ENCODE measurements at regions of chr12 and their contacts with region 1.

Region 1: DNA sequence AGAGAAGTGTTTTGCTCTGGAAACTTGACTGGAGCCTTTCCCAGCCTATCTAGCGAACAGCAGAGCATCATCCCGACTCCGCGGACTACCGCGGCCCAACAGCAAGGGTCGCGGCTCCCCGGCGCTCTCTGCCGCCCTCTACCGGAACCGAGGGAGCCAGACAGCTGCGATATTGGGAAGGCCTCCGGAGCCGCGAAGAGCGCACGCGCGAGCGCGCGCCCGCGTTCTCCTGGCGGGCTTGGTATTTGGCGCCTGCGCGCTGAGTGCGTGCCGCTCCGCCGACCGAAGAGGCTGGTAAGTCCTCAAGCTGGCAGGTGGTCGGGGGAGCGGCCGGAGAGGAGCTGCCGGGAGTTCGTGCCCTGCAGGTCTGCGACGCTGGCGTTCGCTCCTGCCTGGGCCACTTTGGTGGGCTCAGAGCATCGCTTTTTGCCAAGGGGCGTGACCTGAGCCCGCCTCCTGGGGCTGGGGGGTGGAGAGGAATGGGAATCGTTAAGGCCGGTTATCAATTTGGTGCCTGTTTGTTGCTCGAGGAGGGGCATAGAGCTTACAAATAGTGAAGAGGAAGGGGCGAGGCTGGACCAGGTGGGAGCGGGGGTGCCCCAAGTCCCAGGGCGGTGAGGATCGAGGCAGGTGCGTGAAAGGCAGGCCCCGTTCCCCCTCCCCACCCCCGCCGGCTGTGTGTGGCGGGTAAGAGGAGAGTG is at the start of gene TMEM106C:
- DNase-seq: peak; percentile 88 to 94 (median 92)
- ATAC-seq: peak; percentile 99
- H3K4me3 ChIP-seq: peak within 1 kb of the TSS; percentile 90
- H3K4me3 Mint-ChIP-seq: peak within 1 kb of the TSS; percentile 92 to 100 (median 96)
- H3K27ac ChIP-seq: peak within 1 kb of the TSS; percentile 75
- H3K27ac Mint-ChIP-seq: peak within 1 kb of the TSS; percentile 86 to 94 (median 90)
- H3K4me1 ChIP-seq: peaks cover 7 to 13% of the 10 kb centered on the region in 2 donors
- H3K4me1 Mint-ChIP-seq: peaks cover 20 to 42% (median 34%) of the 10 kb centered on the region in 7 donors
- H3K27me3 ChIP-seq: no peaks in the 10 kb centered on the region
- H3K27me3 Mint-ChIP-seq: peaks cover 0 to 36% (median 6%) of the 10 kb centered on the region in 5 donors
- total RNA-seq, gene TMEM106C: 20.7 to 120 (median 34.4) TPM

Region 2: DNA sequence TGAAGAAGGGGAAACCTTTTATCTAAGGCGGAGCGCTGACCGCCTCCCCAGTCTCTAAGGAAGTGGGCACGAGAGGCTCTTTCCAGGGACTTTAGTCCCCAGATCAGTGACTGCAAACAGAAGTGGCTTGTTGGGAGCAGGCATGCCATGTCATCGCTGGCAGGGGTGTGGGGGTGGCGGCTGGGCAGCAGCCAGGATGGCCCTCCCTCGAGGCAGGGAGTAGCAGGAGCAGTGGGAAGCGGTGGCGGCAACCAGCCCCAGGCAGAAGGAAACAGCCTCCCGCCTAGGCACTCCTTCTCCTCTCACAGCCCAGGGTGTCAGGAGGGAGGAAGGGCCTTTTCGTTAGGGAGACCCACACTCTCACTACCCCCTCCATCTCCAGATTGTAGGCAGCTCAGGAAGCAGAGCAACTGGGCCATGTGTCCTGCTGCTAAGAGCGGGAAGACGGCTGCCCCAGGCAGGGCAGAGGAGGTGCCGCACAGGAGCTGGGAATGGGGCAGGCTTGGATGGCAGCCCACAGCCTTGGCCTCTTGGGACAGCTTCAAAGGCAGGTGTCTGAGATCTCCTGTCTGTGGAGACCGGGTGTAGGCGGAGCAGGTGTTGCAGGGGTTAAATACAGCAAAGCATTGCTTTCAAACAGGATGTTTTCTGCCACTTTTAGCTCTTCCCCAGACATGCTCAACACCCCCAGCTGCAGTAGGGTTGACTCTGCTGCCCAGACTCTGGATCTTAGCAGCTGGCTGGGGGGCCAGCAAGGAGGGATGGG is 80.5 kb before region 1 on chr12:
- CTCF ChIA-PET with region 1: no interaction called
- POLR2A ChIA-PET with region 1: no interaction called
- intact Hi-C with region 1: loop called (anchors 5 kb)
- DNase-seq: peak in 7 of 9 donors; percentile 30 to 60 (median 55)
- ATAC-seq: peak; percentile 71
- H3K4me3 ChIP-seq: peak overlapping the region; percentile 73
- H3K4me3 Mint-ChIP-seq: peak overlapping the region; percentile 84 to 95 (median 90)
- H3K27ac ChIP-seq: peak overlapping the region; percentile 50
- H3K27ac Mint-ChIP-seq: peak overlapping the region; percentile 72 to 99 (median 95)
- H3K4me1 ChIP-seq: peaks cover 14 to 38% of the 10 kb centered on the region in 2 donors
- H3K4me1 Mint-ChIP-seq: peaks cover 33 to 82% (median 54%) of the 10 kb centered on the region in 7 donors
- H3K27me3 ChIP-seq: no peaks in the 10 kb centered on the region
- H3K27me3 Mint-ChIP-seq: no peaks in the 10 kb centered on the region

Region 3: GRCh38 chr12:48001505-48002413 is 38.3 kb after region 1 on chr12:
- CTCF ChIA-PET with region 1: no interaction called
- POLR2A ChIA-PET with region 1: no interaction called
- intact Hi-C with region 1: loop called in 1 of 2 experiments (anchors 5 kb)
- DNase-seq: peak in 3 of 9 donors; percentile 15 to 41 (median 18)
- ATAC-seq: peak; percentile 30
- H3K4me3 ChIP-seq: peak overlapping the region; percentile 15
- H3K4me3 Mint-ChIP-seq: peak overlapping the region; percentile 76 to 90 (median 80)
- H3K27ac ChIP-seq: no peak overlapping the region
- H3K27ac Mint-ChIP-seq: peak overlapping the region in 2 of 9 donors; percentile 21 to 72
- H3K4me1 ChIP-seq: peaks cover 34 to 45% of the 10 kb centered on the region in 2 donors
- H3K4me1 Mint-ChIP-seq: peaks cover 21 to 43% (median 39%) of the 10 kb centered on the region in 7 donors
- H3K27me3 ChIP-seq: peaks cover 25 to 44% of the 10 kb centered on the region in 2 donors
- H3K27me3 Mint-ChIP-seq: peaks cover 76 to 96% (median 83%) of the 10 kb centered on the region in 5 donors

Region 4: DNA sequence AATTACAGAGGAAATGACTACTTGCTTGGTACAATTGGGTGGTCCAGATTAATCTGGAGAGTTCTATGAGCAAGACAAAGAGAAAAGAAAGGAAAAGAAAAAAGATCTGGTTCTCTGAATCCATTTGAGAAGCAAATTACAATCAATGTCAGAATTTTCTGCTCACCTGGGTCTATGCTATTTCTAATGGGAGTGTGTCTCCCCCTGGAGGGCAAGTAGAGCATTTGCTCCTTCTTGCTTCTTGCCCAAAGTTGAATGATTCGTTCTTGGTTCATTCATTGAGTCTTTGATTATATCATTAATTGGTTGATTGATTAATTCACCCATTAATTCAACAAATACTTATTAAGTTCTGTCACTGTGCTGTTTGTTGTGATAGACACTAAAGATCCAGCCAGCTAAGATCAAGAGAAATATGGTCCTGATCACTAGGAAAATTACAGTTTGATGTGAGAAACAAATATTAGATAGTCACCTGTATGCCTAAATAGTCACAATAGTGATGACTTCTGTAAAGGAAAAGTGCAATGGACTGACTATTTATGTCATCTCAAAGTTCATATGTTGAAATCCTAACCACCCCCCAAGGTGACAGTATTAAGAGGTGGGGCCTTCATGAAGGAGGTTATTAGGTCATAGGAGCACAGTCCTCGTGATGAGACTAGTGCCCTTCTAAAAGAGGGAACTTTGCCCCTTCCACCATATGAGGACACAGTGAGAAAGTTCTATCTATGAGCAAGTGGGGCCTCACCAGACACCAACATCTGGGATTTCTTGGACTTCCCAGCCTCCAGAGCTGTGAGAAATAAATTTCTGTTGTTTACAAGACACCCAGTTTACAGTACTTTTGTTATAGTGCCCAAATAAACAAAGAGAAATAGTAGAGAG is 201.8 kb after region 1 on chr12:
- CTCF ChIA-PET with region 1: no interaction called
- POLR2A ChIA-PET with region 1: no interaction called
- intact Hi-C with region 1: loop called (anchors 1 kb)
- DNase-seq: peak in 7 of 9 donors; percentile 54 to 77 (median 70)
- ATAC-seq: peak; percentile 87
- H3K4me3 ChIP-seq: no peak overlapping the region
- H3K4me3 Mint-ChIP-seq: no peak overlapping the region
- H3K27ac ChIP-seq: no peak overlapping the region
- H3K27ac Mint-ChIP-seq: no peak overlapping the region
- H3K4me1 ChIP-seq: no peaks in the 10 kb centered on the region
- H3K4me1 Mint-ChIP-seq: peaks cover 2 to 16% (median 14%) of the 10 kb centered on the region in 7 donors
- H3K27me3 ChIP-seq: no peaks in the 10 kb centered on the region
- H3K27me3 Mint-ChIP-seq: peaks cover 0 to 33% (median 12%) of the 10 kb centered on the region in 5 donors

Region 5: GRCh38 chr12:48350249-48351021 is 386.9 kb after region 1 on chr12 and contains the start of gene ZNF641:
- CTCF ChIA-PET with region 1: no interaction called
- POLR2A ChIA-PET with region 1: no interaction called
- intact Hi-C with region 1: loop called in 1 of 2 experiments (anchors 5 kb)
- DNase-seq: peak; percentile 74 to 85 (median 84)
- ATAC-seq: peak; percentile 95
- H3K4me3 ChIP-seq: peak within 1 kb of the TSS; percentile 77
- H3K4me3 Mint-ChIP-seq: peak within 1 kb of the TSS; percentile 91 to 99 (median 96)
- H3K27ac ChIP-seq: peak within 1 kb of the TSS; percentile 92
- H3K27ac Mint-ChIP-seq: peak within 1 kb of the TSS; percentile 89 to 99 (median 96)
- H3K4me1 ChIP-seq: peaks cover 14 to 25% of the 10 kb centered on the region in 2 donors
- H3K4me1 Mint-ChIP-seq: peaks cover 25 to 61% (median 49%) of the 10 kb centered on the region in 7 donors
- H3K27me3 ChIP-seq: peaks cover 0 to 5% of the 10 kb centered on the region in 2 donors
- H3K27me3 Mint-ChIP-seq: peaks cover 0 to 12% (median 0%) of the 10 kb centered on the region in 5 donors
- total RNA-seq, gene ZNF641: 22.1 to 50.3 (median 30.1) TPM